CD4-positive, alpha-beta memory T cell (primary cell): ENCODE measurements at regions of chr7 and their contacts with region 1.

Region 1: DNA sequence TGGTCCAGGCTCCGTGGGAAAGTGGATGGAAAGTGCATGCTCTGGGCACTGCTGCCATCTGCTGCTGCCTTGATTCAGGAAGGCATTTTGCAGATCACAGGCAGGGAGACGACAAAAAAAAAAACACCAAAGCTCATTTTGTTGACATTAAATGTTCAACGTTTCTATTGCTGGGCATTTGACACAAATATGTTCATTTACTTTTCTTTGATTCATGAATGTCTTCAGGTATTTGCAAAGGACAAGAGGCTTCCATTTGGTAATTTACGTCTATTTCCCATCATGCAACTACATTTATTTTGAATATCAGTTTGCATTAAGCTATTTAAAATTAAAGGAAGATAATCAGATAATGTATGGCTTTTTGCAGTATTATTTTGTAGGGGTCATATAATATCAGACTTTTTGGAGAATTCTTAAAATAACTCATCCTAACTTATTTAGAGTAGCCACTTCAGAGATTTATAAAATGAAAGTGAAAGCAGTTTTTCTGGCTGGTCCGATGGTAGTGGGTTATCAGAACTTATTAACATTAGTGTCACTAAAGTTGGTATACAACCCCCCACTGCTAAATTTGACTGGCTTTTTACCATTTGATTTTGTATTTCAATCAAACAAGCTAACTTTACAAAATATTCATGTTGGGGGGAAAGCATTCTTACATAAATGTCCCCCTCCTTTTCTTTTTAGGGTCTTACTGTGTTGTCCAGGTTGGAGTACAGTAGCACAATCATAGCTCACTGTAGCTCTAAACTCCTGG is 65.3 kb downstream of the PDIA4 start:
- DNase-seq: peak; percentile 61 to 80 (median 76)
- H3K4me3 ChIP-seq: peak overlapping the region; percentile 43 to 57
- H3K4me3 Mint-ChIP-seq: peak overlapping the region; percentile 91 to 99 (median 95)
- H3K27ac ChIP-seq: peak overlapping the region; percentile 50
- H3K27ac Mint-ChIP-seq: peak overlapping the region; percentile 86 to 98 (median 93)
- H3K4me1 ChIP-seq: peaks cover 33% of the 10 kb centered on the region
- H3K4me1 Mint-ChIP-seq: peaks cover 11 to 38% (median 27%) of the 10 kb centered on the region in 4 donors
- H3K27me3 ChIP-seq: no peaks in the 10 kb centered on the region
- H3K27me3 Mint-ChIP-seq: no peaks in the 10 kb centered on the region

Region 2: GRCh38 chr7:148503875-148504487 is 459.0 kb before region 1 on chr7:
- CTCF ChIA-PET with region 1: interaction called, 30 read pairs
- POLR2A ChIA-PET with region 1: interaction called, 3 read pairs
- intact Hi-C with region 1: loop called (anchors 1 kb)
- DNase-seq: peak in 4 of 5 donors; percentile 35 to 52 (median 44)
- H3K4me3 ChIP-seq: no peak overlapping the region
- H3K4me3 Mint-ChIP-seq: no peak overlapping the region
- H3K27ac ChIP-seq: no peak overlapping the region
- H3K27ac Mint-ChIP-seq: no peak overlapping the region
- H3K4me1 ChIP-seq: peaks cover 4% of the 10 kb centered on the region
- H3K4me1 Mint-ChIP-seq: peaks cover 7 to 16% (median 9%) of the 10 kb centered on the region in 4 donors
- H3K27me3 ChIP-seq: no peaks in the 10 kb centered on the region
- H3K27me3 Mint-ChIP-seq: peaks cover 17 to 23% of the 10 kb centered on the region in 2 donors

Region 3: DNA sequence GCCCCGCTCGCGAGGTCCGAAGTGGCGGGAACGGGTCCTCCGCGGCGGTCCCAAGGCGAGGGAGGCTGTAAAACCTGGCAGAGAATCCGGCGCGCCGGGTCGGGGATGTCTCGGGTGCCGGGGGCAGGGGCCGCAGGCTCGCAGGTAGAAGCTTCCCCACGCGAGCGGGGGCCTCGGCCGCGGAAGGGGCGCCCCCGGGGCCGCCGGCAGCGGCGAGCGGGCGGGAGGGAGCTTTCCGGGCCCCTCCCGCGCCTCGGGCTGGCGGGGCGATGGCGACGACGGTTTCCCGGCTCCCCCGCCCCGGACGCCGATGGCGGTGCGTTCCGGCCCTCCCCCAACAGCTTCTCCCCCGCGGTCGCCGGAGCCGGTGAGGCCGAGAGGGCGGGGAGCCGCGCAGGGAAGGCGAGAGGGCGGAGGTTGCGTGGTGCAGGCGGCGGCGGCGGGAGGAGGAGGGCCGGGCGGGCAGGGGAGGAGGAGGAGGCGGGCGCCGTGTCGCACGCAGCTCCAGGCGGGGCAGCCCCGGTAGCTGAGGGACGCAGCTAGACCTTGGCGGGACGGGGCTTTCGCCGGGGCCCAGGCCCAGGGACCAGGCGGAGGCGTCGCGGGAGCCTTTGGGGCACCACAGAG is 264.5 kb before region 1 on chr7 and contains the start of gene CUL1:
- CTCF ChIA-PET with region 1: interaction called, 8 read pairs
- POLR2A ChIA-PET with region 1: interaction called, 11 read pairs
- intact Hi-C with region 1: loop called (anchors 1 kb)
- DNase-seq: peak; percentile 84 to 89 (median 85)
- H3K4me3 ChIP-seq: peak within 1 kb of the TSS; percentile 67 to 89
- H3K4me3 Mint-ChIP-seq: peak within 1 kb of the TSS; percentile 88 to 95 (median 91)
- H3K27ac ChIP-seq: peak within 1 kb of the TSS; percentile 89
- H3K27ac Mint-ChIP-seq: peak within 1 kb of the TSS; percentile 91 to 96 (median 94)
- H3K4me1 ChIP-seq: peaks cover 45% of the 10 kb centered on the region
- H3K4me1 Mint-ChIP-seq: peaks cover 41 to 59% (median 47%) of the 10 kb centered on the region in 4 donors
- H3K27me3 ChIP-seq: no peaks in the 10 kb centered on the region
- H3K27me3 Mint-ChIP-seq: no peaks in the 10 kb centered on the region
- total RNA-seq, gene CUL1: 65.6 to 66.8 TPM

Region 4: DNA sequence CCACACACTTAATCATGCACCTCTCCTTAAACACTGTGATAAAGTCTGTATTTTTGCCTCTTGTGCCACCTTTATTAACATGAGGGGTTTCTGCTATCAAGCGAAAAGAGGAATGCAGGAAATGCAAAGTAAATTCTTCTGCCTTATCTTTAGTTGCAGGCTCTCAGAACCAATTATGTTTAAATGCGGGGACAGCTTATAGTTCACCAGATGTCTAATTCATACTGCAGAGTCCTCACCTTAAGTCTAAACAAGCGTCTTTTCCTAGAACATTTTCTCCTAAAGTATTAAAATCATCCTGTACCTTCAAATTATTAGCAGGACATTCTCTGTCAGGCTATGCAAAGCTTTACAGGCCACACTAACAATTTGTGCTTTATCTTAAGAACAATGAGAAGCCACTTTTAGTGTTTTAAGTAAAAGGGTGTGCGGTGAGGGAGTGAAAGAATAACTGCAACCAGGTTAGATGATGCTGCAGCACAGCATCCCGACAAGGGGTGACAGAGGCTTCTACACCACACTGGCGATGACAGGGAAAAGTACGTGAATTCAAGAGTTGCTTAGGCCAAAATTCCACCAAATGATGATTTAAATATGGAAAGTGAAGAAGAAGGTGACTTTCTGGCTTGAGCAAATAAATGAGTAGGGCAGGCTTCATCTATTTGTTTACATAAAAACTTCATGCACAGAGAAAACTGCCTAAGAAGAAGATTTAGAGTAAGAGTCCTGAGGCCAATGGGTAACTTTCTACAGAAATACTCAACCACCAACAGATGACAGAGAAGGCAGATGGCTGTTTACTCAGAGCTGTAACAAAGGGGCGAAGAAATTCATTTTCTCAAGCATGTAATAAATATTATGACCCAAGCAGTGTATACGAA is 114.9 kb before region 1 on chr7:
- CTCF ChIA-PET with region 1: interaction called, 12 read pairs
- POLR2A ChIA-PET with region 1: no interaction called
- intact Hi-C with region 1: no loop called
- DNase-seq: no peak
- H3K4me3 ChIP-seq: no peak overlapping the region
- H3K4me3 Mint-ChIP-seq: no peak overlapping the region
- H3K27ac ChIP-seq: no peak overlapping the region
- H3K27ac Mint-ChIP-seq: no peak overlapping the region
- H3K4me1 ChIP-seq: peaks cover 58% of the 10 kb centered on the region
- H3K4me1 Mint-ChIP-seq: peaks cover 27 to 46% (median 37%) of the 10 kb centered on the region in 4 donors
- H3K27me3 ChIP-seq: no peaks in the 10 kb centered on the region
- H3K27me3 Mint-ChIP-seq: no peaks in the 10 kb centered on the region

Region 5: GRCh38 chr7:148884299-148885022 is 78.5 kb before region 1 on chr7:
- CTCF ChIA-PET with region 1: interaction called, 14 read pairs
- POLR2A ChIA-PET with region 1: interaction called, 7 read pairs
- intact Hi-C with region 1: loop called (anchors 1 kb)
- DNase-seq: peak; percentile 91 to 96 (median 94)
- H3K4me3 ChIP-seq: peak overlapping the region in 1 of 2 donors; percentile 84
- H3K4me3 Mint-ChIP-seq: peak overlapping the region; percentile 90 to 97 (median 94)
- H3K27ac ChIP-seq: peak overlapping the region; percentile 79
- H3K27ac Mint-ChIP-seq: peak overlapping the region; percentile 89 to 96 (median 92)
- H3K4me1 ChIP-seq: peaks cover 31% of the 10 kb centered on the region
- H3K4me1 Mint-ChIP-seq: peaks cover 12 to 38% (median 24%) of the 10 kb centered on the region in 4 donors
- H3K27me3 ChIP-seq: no peaks in the 10 kb centered on the region
- H3K27me3 Mint-ChIP-seq: no peaks in the 10 kb centered on the region

Region 6: GRCh38 chr7:148975896-148976295 is 12.9 kb after region 1 on chr7:
- CTCF ChIA-PET with region 1: interaction called, 15 read pairs
- POLR2A ChIA-PET with region 1: no interaction called
- intact Hi-C with region 1: no loop called
- DNase-seq: no peak
- H3K4me3 ChIP-seq: no peak overlapping the region
- H3K4me3 Mint-ChIP-seq: no peak overlapping the region
- H3K27ac ChIP-seq: no peak overlapping the region
- H3K27ac Mint-ChIP-seq: no peak overlapping the region
- H3K4me1 ChIP-seq: no peaks in the 10 kb centered on the region
- H3K4me1 Mint-ChIP-seq: peaks cover 9 to 20% (median 11%) of the 10 kb centered on the region in 4 donors
- H3K27me3 ChIP-seq: no peaks in the 10 kb centered on the region
- H3K27me3 Mint-ChIP-seq: peaks cover 0 to 2% of the 10 kb centered on the region in 2 donors

Region 7: DNA sequence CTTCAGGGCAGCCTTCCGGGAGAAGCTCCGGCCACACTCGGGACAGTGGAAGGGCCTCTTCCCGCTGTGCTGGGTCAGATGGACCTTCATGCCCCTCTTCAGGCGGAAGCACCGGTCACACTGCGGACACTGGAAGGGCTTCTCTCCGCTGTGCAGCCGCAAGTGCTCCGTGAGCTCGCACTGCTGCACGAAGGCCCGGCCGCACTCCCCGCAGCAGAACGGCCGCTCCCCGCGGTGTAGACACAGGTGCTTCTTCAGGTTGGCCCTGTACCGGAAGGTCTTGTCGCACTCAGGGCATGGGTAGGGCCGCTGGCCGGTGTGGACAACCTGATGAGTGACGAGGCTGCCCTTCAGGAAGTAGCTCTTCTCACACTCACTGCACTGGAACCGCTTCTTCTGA is 141.7 kb after region 1 on chr7:
- CTCF ChIA-PET with region 1: no interaction called
- POLR2A ChIA-PET with region 1: no interaction called
- intact Hi-C with region 1: no loop called
- DNase-seq: no peak
- H3K4me3 ChIP-seq: no peak overlapping the region
- H3K4me3 Mint-ChIP-seq: no peak overlapping the region
- H3K27ac ChIP-seq: no peak overlapping the region
- H3K27ac Mint-ChIP-seq: no peak overlapping the region
- H3K4me1 ChIP-seq: no peaks in the 10 kb centered on the region
- H3K4me1 Mint-ChIP-seq: peaks cover 0 to 1% (median 0%) of the 10 kb centered on the region in 4 donors
- H3K27me3 ChIP-seq: no peaks in the 10 kb centered on the region
- H3K27me3 Mint-ChIP-seq: peaks cover 0 to 2% of the 10 kb centered on the region in 2 donors